GM12878 (cell line): ENCODE measurements at regions of chrX and their contacts with region 1.

Region 1: GRCh38 chrX:7925867-7926472 is 1.2 kb downstream of the PNPLA4 start:
- DNase-seq: peak; percentile 51
- ATAC-seq: peak; percentile 59
- H3K4me3 ChIP-seq: peak overlapping the region; percentile 67; the same call in 1 of the 2 replicates
- H3K27ac ChIP-seq: no peak overlapping the region; the same call in 1 of the 2 replicates
- H3K4me1 ChIP-seq: peaks cover 7% of the 10 kb centered on the region
- H3K27me3 ChIP-seq: no peaks in the 10 kb centered on the region
- CTCF ChIP-seq: peak; percentile 87 to 95 (median 91); a peak in 5 of 6 replicates
- EP300 ChIP-seq: no peak
- POLR2A ChIP-seq: no peak
- RAD21 ChIP-seq: peak; percentile 88

Region 2: GRCh38 chrX:6738518-6739470 is 1187.2 kb before region 1 on chrX:
- CTCF ChIA-PET with region 1: no interaction called
- POLR2A ChIA-PET with region 1: no interaction called
- RAD21 ChIA-PET with region 1: no interaction called
- SMC1A ChIA-PET with region 1: no interaction called
- in situ Hi-C with region 1: loop called (anchors 25 kb)
- intact Hi-C with region 1: loop called (anchors 5 kb)
- DNase-seq: peak; percentile 93
- ATAC-seq: peak; percentile 98
- H3K4me3 ChIP-seq: no peak overlapping the region
- H3K27ac ChIP-seq: peak overlapping the region; percentile 88
- H3K4me1 ChIP-seq: peaks cover 15% of the 10 kb centered on the region
- H3K27me3 ChIP-seq: no peaks in the 10 kb centered on the region
- CTCF ChIP-seq: no peak
- EP300 ChIP-seq: peak; percentile 96 to 98
- POLR2A ChIP-seq: no peak
- RAD21 ChIP-seq: no peak; the same call in 1 of the 2 replicates

Region 3: DNA sequence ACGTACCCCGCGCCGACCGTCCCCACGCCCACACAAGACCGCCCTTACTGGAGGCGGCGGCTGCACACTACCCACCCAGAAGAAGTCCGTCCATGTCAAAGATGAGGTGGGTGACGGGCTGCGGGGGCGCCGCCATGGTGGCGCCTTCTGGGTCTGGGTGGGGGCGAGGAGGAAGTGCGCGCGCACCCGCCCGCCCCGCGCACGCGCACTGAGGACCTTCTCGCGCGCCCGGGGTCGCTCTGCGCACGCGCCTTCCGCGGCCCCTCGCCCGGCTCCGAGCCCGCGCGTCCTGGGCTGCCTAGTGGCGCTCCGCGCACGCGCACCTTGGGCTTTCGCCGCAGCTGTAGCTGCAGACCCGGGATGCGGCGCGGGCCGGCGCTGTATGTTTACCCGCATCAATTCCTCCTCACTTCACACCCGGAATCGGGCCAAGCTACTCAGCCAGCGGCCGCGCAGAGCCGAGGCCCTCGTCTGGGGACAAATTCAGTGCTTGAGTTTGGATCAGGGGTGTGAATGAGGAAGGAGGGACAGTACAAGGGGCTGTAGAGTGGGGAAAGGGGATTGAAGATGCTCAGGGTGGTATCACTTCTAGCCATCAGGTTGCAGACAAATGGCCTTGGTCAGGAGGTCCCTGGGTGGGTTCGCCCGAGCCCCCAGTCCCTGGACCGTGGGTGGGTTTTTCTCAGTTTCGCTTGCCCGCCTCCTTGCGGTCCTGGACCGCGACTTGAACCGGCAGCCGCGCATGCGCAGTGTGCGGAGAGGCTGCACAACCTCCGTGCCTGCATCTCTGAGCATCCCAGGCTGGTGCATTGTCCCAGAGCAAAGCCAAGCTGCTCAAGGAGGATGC is 777.8 kb before region 1 on chrX and contains the start of gene PUDP:
- CTCF ChIA-PET with region 1: interaction called, 3 read pairs
- POLR2A ChIA-PET with region 1: no interaction called
- RAD21 ChIA-PET with region 1: interaction called, 3 read pairs
- SMC1A ChIA-PET with region 1: no interaction called
- in situ Hi-C with region 1: no loop called
- intact Hi-C with region 1: loop called (anchors 5 kb)
- DNase-seq: no peak
- ATAC-seq: peak; percentile 86
- H3K4me3 ChIP-seq: peak within 1 kb of the TSS; percentile 98
- H3K27ac ChIP-seq: peak within 1 kb of the TSS; percentile 87
- H3K4me1 ChIP-seq: peaks cover 15% of the 10 kb centered on the region
- H3K27me3 ChIP-seq: no peaks in the 10 kb centered on the region
- CTCF ChIP-seq: peak in 2 of 3 experiments; percentile 25; a peak in 3 of 6 replicates
- EP300 ChIP-seq: no peak
- POLR2A ChIP-seq: peak; percentile 78
- RAD21 ChIP-seq: peak; percentile 9; the same call in 1 of the 2 replicates
- polyA plus RNA-seq, gene PUDP: 68.9 to 83.5 TPM

Region 4: GRCh38 chrX:7233580-7234406 is 692.2 kb before region 1 on chrX:
- CTCF ChIA-PET with region 1: interaction called, 15 read pairs
- POLR2A ChIA-PET with region 1: no interaction called
- RAD21 ChIA-PET with region 1: no interaction called
- SMC1A ChIA-PET with region 1: interaction called, 3 read pairs
- in situ Hi-C with region 1: no loop called
- intact Hi-C with region 1: no loop called
- DNase-seq: no peak
- ATAC-seq: no peak
- H3K4me3 ChIP-seq: no peak overlapping the region
- H3K27ac ChIP-seq: no peak overlapping the region
- H3K4me1 ChIP-seq: no peaks in the 10 kb centered on the region
- H3K27me3 ChIP-seq: no peaks in the 10 kb centered on the region
- CTCF ChIP-seq: peak in 1 of 3 experiments; percentile 11; a peak in 1 of 6 replicates
- EP300 ChIP-seq: no peak
- POLR2A ChIP-seq: no peak
- RAD21 ChIP-seq: peak; percentile 38

Region 5: GRCh38 chrX:7586126-7586525 is 339.8 kb before region 1 on chrX:
- CTCF ChIA-PET with region 1: interaction called, 3 read pairs
- POLR2A ChIA-PET with region 1: no interaction called
- RAD21 ChIA-PET with region 1: no interaction called
- SMC1A ChIA-PET with region 1: no interaction called
- in situ Hi-C with region 1: no loop called
- intact Hi-C with region 1: loop called (anchors 5 kb)
- DNase-seq: no peak
- ATAC-seq: peak; percentile 67; the same call in 2 of the 3 replicates
- H3K4me3 ChIP-seq: no peak overlapping the region
- H3K27ac ChIP-seq: no peak overlapping the region
- H3K4me1 ChIP-seq: no peaks in the 10 kb centered on the region
- H3K27me3 ChIP-seq: no peaks in the 10 kb centered on the region
- CTCF ChIP-seq: peak; percentile 53 to 67 (median 55); a peak in 5 of 6 replicates
- EP300 ChIP-seq: no peak
- POLR2A ChIP-seq: no peak
- RAD21 ChIP-seq: peak; percentile 80

Region 6: GRCh38 chrX:7815166-7815805 is 110.7 kb before region 1 on chrX:
- CTCF ChIA-PET with region 1: no interaction called
- POLR2A ChIA-PET with region 1: no interaction called
- RAD21 ChIA-PET with region 1: no interaction called
- SMC1A ChIA-PET with region 1: no interaction called
- in situ Hi-C with region 1: no loop called
- intact Hi-C with region 1: no loop called
- DNase-seq: no peak
- ATAC-seq: no peak
- H3K4me3 ChIP-seq: no peak overlapping the region
- H3K27ac ChIP-seq: no peak overlapping the region
- H3K4me1 ChIP-seq: no peaks in the 10 kb centered on the region
- H3K27me3 ChIP-seq: no peaks in the 10 kb centered on the region
- CTCF ChIP-seq: no peak
- EP300 ChIP-seq: no peak
- POLR2A ChIP-seq: no peak
- RAD21 ChIP-seq: no peak

Region 7: DNA sequence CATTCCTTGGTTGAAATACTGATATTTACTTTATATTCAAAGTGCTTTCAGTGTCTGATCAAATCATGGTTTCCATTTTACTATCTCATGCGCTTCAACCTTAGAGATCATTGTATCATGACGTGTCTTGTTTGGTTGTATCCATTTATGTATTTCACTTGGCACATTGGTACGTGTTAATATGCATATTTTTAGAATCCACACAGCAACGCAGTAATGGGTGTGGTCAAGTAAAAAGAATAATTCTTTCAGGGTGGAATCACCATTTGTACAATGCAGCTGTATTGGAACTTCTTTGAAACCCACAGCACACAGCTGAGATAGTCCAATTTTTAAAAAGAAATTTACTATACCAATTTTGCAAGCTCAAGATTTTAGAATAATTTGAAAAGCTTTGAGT is 53.9 kb before region 1 on chrX:
- CTCF ChIA-PET with region 1: no interaction called
- POLR2A ChIA-PET with region 1: no interaction called
- RAD21 ChIA-PET with region 1: no interaction called
- SMC1A ChIA-PET with region 1: no interaction called
- in situ Hi-C with region 1: no loop called
- intact Hi-C with region 1: no loop called
- DNase-seq: no peak
- ATAC-seq: no peak
- H3K4me3 ChIP-seq: no peak overlapping the region
- H3K27ac ChIP-seq: no peak overlapping the region
- H3K4me1 ChIP-seq: no peaks in the 10 kb centered on the region
- H3K27me3 ChIP-seq: no peaks in the 10 kb centered on the region; a peak in 1 of 4 replicates
- CTCF ChIP-seq: no peak
- EP300 ChIP-seq: no peak
- POLR2A ChIP-seq: no peak
- RAD21 ChIP-seq: no peak

Region 8: DNA sequence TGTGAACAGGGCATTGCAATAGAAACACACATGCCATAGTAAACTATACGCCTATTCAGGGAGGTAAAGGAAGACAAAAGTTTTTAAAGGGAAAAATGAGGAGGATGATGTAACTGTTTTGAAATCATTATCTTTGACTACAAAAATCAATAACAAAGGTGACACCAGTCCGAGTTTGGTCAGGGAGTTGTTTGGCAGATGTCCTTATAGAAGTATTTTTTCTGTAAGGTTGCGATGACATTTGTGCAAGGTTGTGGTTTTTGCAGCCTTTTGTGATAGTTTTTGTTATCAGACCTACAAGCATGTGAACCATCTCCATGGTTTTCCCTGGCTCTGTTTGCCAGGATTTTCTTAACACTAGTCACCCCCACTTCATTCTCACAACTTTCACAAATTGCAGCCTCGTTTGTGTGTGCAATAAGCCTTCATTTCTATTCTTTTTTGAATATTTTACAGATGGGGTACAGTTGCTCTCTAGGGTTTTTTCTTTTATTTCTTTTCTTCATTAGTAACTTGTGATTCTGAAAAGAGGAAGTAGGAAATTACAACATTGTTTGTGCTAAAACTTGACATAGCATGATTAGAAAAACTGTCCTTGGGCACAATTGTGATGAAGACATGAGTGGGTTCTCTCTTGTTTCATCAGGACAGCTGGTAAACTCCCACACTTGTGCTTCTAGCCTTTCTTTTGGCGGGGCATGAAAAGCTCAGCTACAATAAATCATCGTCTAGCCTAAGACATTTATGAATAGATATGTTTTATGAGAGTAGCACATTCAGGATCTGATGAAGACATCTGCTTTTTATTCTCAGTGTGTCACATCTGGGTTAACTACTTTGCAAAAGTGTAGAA is 61.4 kb after region 1 on chrX:
- CTCF ChIA-PET with region 1: interaction called, 3 read pairs
- POLR2A ChIA-PET with region 1: no interaction called
- RAD21 ChIA-PET with region 1: no interaction called
- SMC1A ChIA-PET with region 1: interaction called, 3 read pairs
- in situ Hi-C with region 1: no loop called
- intact Hi-C with region 1: loop called (anchors 2 kb)
- DNase-seq: peak; percentile 26
- ATAC-seq: peak; percentile 94
- H3K4me3 ChIP-seq: no peak overlapping the region
- H3K27ac ChIP-seq: peak overlapping the region; percentile 6; the same call in 1 of the 2 replicates
- H3K4me1 ChIP-seq: no peaks in the 10 kb centered on the region
- H3K27me3 ChIP-seq: no peaks in the 10 kb centered on the region
- CTCF ChIP-seq: no peak
- EP300 ChIP-seq: peak; percentile 74 to 79; a peak in 2 of 4 replicates
- POLR2A ChIP-seq: no peak
- RAD21 ChIP-seq: no peak